Left cardiac atrium (tissue), 4 donors: ENCODE measurements at regions of chr11 and their contacts with region 1.

Region 1: DNA sequence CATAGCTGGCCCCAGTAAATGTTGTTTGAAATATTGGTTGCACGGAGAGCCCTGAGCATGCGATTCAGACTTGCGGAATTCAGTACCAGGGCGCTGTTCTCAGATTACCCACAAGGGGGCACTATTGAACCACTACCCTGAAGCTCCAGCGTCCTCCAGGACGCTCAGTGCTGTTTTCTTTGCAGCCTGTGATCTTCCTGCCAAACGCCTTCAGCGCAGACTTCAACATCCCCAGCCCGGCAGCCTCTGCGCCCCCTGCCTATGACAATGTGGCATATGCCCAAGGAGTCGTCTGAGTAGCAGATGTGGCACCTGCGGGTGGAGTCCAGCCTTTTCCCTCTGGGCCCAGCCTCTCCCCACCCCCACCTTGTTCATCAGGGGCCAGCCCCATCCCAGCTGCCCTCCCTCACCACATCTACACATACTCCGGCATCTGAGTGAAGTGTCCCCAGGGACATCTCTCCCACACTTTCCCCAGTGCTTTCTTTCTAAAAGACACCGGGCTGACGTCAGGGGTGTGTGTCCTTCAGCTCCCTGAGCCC is 9.6 kb upstream of the MS4A10 start:
- DNase-seq: peak; percentile 86
- ATAC-seq: peak; percentile 87 to 89

Region 2: DNA sequence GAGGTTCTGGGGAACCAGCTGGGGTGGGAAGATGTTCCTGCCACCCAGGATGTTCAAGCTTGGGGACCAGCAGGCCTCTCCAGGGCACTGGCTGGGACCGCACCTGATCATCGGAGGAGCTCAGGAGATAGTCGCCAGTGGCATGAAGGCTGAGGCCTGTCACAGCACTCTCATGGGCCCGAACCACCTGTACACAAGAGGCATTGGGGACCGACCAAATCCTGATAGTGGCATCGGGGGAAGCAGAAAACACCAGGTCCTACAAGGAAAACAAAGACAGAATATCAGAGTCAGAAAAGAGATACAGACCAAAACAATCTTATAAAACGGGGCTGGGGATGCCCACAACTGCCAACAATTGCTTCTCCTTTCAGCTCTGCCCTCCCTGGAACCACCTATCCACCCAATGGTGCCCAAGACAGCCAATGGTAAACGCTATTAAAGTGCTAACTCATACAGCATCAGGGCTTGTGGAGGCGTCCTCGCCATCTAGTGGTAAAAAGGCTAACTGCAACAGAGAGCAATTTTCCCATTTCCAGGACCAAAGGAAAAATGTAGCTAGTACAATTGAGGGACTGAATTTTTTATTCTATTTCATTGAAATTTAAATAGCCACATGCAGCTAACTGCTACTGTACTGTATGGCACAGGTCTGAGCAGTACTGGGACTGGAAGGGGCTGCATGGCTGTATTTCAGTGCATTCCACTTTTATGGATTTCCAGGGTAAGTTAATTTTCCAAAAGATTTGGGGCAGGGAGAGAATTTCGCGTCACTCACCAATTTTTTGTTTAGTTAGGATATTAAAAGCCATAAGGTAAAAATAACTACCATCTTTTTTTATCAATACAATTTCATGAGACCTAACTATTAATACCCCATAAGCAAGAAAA is 123.8 kb after region 1 on chr11:
- intact Hi-C with region 1: loop called in 1 of 2 experiments (anchors 5 kb)
- DNase-seq: no peak
- ATAC-seq: peak; percentile 73